Ovary (tissue), 10 donors: ENCODE measurements at regions of chr2 and their contacts with region 1.

Region 1: DNA sequence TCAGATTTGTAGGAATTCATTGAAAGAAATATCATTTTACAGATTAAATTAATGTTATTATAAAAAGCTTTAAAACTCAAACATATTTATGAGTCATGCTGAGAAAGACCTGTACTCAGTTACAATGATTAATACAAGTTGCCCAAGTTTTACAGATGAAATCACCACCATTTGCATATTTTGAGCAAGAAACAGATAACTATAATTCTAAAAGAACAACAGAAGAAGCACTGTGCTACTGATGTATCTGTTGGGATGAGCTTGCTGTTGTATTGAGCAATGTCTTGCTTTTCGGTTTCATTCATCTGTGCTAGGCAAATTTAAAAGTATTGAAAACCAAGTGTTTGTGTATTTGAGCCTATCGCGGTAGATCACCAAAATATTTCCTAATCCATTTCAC is 1589.1 kb upstream of the ZEB2 start:
- DNase-seq: no peak
- H3K4me3 ChIP-seq: no peak overlapping the region
- H3K27ac ChIP-seq: no peak overlapping the region
- H3K4me1 ChIP-seq: no peaks in the 10 kb centered on the region
- H3K27me3 ChIP-seq: no peaks in the 10 kb centered on the region
- CTCF ChIP-seq: no peak
- EP300 ChIP-seq: no peak
- POLR2A ChIP-seq: no peak

Region 2: DNA sequence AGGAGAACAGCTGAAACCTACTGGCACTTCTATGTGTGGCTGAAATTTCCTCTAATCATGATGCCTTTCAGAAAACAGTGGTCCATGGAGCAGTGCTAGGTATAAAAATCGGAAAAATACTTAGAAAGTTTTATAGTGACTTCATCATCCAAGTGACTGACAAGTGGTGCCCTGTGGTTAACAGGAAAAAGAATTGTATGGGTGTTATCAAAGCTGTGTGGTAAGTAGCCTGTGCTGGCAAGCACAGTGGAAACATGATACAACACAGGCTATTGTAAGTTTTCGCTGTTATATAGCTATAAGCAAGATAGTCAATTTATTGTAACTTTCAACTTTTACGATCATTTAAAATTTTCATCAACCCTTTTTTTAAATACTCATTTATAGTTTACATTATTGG is 10.6 kb after region 1 on chr2:
- intact Hi-C with region 1: loop called in 2 of 4 experiments (anchors 2 kb)
- DNase-seq: no peak
- H3K4me3 ChIP-seq: no peak overlapping the region
- H3K27ac ChIP-seq: no peak overlapping the region
- H3K4me1 ChIP-seq: no peaks in the 10 kb centered on the region
- H3K27me3 ChIP-seq: no peaks in the 10 kb centered on the region
- CTCF ChIP-seq: no peak
- EP300 ChIP-seq: no peak
- POLR2A ChIP-seq: no peak

Region 3: GRCh38 chr2:146124741-146125140 is 15.7 kb after region 1 on chr2:
- intact Hi-C with region 1: loop called in 2 of 4 experiments (anchors 2 kb)
- DNase-seq: no peak
- H3K4me3 ChIP-seq: no peak overlapping the region
- H3K27ac ChIP-seq: no peak overlapping the region
- H3K4me1 ChIP-seq: no peaks in the 10 kb centered on the region
- H3K27me3 ChIP-seq: no peaks in the 10 kb centered on the region
- CTCF ChIP-seq: no peak
- EP300 ChIP-seq: no peak
- POLR2A ChIP-seq: no peak